Upper lobe of right lung (tissue), 1 donor: ENCODE measurements at regions of chr3 and their contacts with region 1.

Region 1: DNA sequence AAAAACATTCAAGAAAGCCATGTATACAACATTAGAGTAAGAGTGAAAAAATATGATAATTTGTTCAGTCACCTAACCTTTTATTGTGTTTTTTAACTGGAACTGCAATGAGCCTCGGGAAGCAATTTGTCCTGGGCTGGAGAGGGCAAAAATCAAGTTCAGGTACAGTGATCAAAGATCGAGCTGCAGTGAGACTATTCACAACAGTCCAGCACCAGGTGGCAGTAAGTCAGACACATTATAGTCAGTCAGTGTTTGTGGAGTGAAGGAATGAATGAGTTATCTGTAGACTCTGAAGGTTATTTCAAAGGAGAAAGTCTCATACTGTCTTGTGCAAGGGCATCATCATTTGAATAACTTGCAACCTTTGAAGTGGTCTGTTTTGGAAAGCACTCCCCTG is 116.6 kb downstream of the CHDH start:
- DNase-seq: no peak
- ATAC-seq: no peak
- H3K4me3 ChIP-seq: no peak overlapping the region
- H3K27ac ChIP-seq: no peak overlapping the region
- H3K4me1 ChIP-seq: no peaks in the 10 kb centered on the region
- H3K27me3 ChIP-seq: no peaks in the 10 kb centered on the region
- CTCF ChIP-seq: no peak

Region 2: DNA sequence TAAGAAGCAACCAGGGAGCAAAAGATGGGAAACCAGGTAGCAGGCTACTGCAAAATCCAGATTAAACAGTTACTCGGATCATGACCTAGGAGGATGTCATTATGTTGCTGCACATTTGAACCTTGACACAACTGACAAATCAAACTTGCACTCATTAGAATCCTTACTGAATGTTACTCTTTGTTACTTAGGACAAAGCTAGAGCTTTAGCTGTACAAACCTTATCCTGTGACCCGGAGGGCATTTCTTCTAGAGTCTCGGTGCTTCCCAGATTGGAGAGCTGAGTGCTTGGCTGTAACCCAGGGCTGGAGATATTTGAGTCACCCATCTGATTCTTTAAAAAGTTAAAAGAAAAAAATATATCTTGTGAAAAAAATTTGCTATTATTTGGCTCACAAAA is 425.7 kb before region 1 on chr3:
- intact Hi-C with region 1: loop called (anchors 10 kb)
- DNase-seq: no peak
- ATAC-seq: no peak
- H3K4me3 ChIP-seq: no peak overlapping the region
- H3K27ac ChIP-seq: no peak overlapping the region
- H3K4me1 ChIP-seq: peaks cover 4% of the 10 kb centered on the region
- H3K27me3 ChIP-seq: no peaks in the 10 kb centered on the region
- CTCF ChIP-seq: no peak

Region 3: GRCh38 chr3:53382106-53382505 is 347.5 kb before region 1 on chr3:
- intact Hi-C with region 1: no loop called
- DNase-seq: no peak
- ATAC-seq: no peak
- H3K4me3 ChIP-seq: no peak overlapping the region
- H3K27ac ChIP-seq: no peak overlapping the region
- H3K4me1 ChIP-seq: no peaks in the 10 kb centered on the region
- H3K27me3 ChIP-seq: no peaks in the 10 kb centered on the region
- CTCF ChIP-seq: no peak